K562 (cell line): ENCODE measurements at regions of chr1 and their contacts with region 1.

Region 1: GRCh38 chr1:230127105-230128054 is 60.3 kb downstream of the GALNT2 start:
- DNase-seq: peak; percentile 82 to 99 (median 90)
- ATAC-seq: peak; percentile 94
- H3K4me3 ChIP-seq: no peak overlapping the region
- H3K27ac ChIP-seq: peak overlapping the region; percentile 76
- H3K4me1 ChIP-seq: peaks cover 64 to 74% of the 10 kb centered on the region in 2 experiments
- H3K27me3 ChIP-seq: no peaks in the 10 kb centered on the region
- CTCF ChIP-seq: peak in 1 of 3 experiments; percentile 26; a peak in 2 of 6 replicates
- EP300 ChIP-seq: peak; percentile 98
- POLR2A ChIP-seq: no peak
- RAD21 ChIP-seq: no peak; a peak in 2 of 4 replicates

Region 2: DNA sequence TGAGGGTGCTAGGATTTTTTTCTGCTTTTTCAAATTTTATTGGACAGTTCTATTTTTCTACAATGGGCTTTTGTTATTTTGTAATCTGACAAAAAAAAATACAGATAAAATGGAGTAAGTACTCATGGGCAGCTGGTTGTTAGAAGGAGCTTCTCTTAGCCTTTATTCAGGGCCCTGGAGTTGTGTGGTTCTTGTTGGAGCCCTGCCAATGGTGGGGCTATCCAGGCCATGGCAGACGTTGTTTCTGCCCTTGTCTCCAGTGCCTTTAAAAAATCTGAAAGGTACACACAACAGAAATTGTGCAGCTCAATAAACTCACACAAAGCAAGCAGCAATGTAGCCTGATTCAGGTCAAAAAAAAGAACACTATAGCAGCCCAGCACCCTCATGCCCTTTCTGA is 213.9 kb before region 1 on chr1:
- CTCF ChIA-PET with region 1: no interaction called
- POLR2A ChIA-PET with region 1: no interaction called
- in situ Hi-C with region 1: no loop called
- intact Hi-C with region 1: no loop called
- DNase-seq: no peak
- ATAC-seq: no peak
- H3K4me3 ChIP-seq: no peak overlapping the region
- H3K27ac ChIP-seq: no peak overlapping the region
- H3K4me1 ChIP-seq: 0 out of 5 replicates have a peak, but pooled peaks cover 0 to 2% of the 10 kb centered on the region in 2 experiments
- H3K27me3 ChIP-seq: peaks cover 0 to 3% of the 10 kb centered on the region in 2 experiments; a peak in 2 of 5 replicates
- CTCF ChIP-seq: no peak
- EP300 ChIP-seq: no peak
- POLR2A ChIP-seq: no peak
- RAD21 ChIP-seq: no peak

Region 3: DNA sequence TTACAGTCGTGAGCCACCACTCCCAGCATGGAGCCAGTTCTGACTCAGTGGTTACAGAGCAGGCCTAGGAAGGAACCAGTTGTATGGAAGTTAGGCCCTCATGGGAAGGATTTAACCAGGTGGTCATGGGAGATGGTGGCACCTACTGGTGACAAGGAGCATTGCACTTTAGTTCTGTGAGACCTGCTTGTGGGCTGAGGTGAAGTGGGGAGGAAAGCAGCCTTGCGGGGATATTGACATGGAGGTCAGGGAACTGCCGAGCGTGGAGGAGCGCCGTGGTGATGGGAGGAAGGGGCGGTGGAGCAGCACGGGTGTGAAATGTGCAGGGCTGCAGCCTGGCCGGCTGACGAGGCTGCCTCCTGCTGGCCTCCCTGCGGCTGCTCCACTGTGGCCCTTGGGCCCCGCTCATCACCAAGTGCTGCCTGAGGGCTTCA is 40.1 kb after region 1 on chr1:
- CTCF ChIA-PET with region 1: no interaction called
- POLR2A ChIA-PET with region 1: no interaction called
- in situ Hi-C with region 1: no loop called
- intact Hi-C with region 1: loop called (anchors 1 kb)
- DNase-seq: peak; percentile 80 to 86 (median 84)
- ATAC-seq: peak; percentile 89
- H3K4me3 ChIP-seq: no peak overlapping the region
- H3K27ac ChIP-seq: no peak overlapping the region
- H3K4me1 ChIP-seq: peaks cover 13 to 34% of the 10 kb centered on the region in 2 experiments
- H3K27me3 ChIP-seq: no peaks in the 10 kb centered on the region
- CTCF ChIP-seq: peak; percentile 82 to 97 (median 88)
- EP300 ChIP-seq: peak; percentile 11; the same call in 1 of the 2 replicates
- POLR2A ChIP-seq: no peak
- RAD21 ChIP-seq: peak; percentile 73 to 96

Region 4: GRCh38 chr1:230231774-230232145 is 104.4 kb after region 1 on chr1:
- CTCF ChIA-PET with region 1: no interaction called
- POLR2A ChIA-PET with region 1: no interaction called
- in situ Hi-C with region 1: no loop called
- intact Hi-C with region 1: no loop called
- DNase-seq: peak in 2 of 4 experiments; percentile 40 to 75
- ATAC-seq: peak; percentile 92
- H3K4me3 ChIP-seq: no peak overlapping the region
- H3K27ac ChIP-seq: peak overlapping the region; percentile 53; the same call in 1 of the 3 replicates
- H3K4me1 ChIP-seq: peaks cover 0 to 12% of the 10 kb centered on the region in 2 experiments; a peak in 4 of 5 replicates
- H3K27me3 ChIP-seq: no peaks in the 10 kb centered on the region
- CTCF ChIP-seq: no peak
- EP300 ChIP-seq: no peak
- POLR2A ChIP-seq: no peak
- RAD21 ChIP-seq: no peak